Adrenal gland (tissue), 19 donors: ENCODE measurements at regions of chr1 and their contacts with region 1.

Region 1: DNA sequence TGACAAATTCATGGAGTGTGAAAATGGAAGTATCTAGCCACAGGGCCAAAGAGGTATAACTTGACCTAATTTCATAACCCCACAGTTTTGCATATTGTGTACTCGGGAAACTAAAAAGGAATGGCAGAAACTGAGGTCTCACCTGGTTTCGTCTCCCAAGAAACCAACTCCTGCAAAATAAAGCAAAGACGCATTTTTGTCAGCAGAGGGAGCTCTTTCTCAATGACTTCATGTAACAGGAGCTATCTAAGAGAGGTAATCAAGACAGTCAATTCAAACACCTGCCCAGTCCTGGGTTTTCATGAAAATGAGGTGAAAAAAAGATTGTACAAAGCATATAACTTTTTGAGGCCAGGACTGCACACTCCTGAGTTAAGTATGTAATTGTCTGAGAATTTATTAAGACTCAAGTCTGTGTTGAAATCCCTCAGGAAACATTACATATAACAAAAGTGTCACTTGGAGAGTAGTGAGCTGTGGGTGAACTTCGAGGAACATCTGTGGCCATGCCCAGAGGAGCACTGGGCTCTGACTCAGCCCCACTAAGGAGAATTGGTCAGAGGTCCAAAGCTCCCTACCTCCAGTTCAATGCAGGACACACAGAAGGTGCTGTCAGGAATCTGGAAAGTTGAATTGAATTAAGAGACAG is 17.6 kb downstream of the FCRL4 start:
- DNase-seq: peak in 6 of 7 donors; percentile 22 to 52 (median 36)
- H3K4me3 ChIP-seq: no peak overlapping the region
- H3K27ac ChIP-seq: no peak overlapping the region
- H3K4me1 ChIP-seq: no peaks in the 10 kb centered on the region
- H3K27me3 ChIP-seq: peaks cover 6% of the 10 kb centered on the region
- CTCF ChIP-seq: peak; percentile 40 to 64 (median 62)
- POLR2A ChIP-seq: no peak

Region 2: DNA sequence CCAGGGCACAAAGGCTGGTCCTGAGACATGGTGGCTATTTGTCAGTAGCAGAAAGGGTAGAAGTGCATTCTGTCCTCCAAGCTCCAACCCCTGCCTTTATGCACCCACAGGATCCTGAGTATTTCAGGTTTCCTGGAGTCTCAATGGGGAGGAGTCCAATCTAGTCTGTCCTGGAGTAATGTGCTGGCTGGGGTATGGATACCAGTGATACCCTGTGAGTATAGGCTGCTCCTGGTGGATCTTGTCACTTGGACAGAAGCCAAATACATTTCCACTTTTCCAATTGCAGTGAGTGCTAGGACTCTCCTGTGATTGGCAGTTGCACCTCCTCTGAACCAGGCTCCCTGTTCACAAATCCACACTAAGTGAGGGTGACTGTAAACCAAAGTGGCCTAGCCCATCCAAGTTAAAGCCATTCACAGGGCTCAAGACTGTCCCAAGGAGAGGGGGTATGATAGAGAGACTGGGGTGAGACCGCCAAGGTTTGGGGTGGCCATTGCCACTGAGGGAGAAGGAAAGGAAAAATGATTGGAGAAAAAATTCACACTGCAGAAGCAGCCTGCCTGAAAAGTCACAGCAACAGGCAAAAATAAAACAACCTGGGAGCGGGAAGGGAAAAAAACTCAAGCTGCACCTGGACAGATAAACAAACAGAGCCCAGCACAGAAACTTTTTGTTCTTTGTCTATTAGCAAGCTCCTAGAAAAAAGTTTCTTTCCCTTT is 278.7 kb before region 1 on chr1:
- intact Hi-C with region 1: no loop called
- DNase-seq: no peak
- H3K4me3 ChIP-seq: no peak overlapping the region
- H3K27ac ChIP-seq: no peak overlapping the region
- H3K4me1 ChIP-seq: no peaks in the 10 kb centered on the region
- H3K27me3 ChIP-seq: no peaks in the 10 kb centered on the region
- CTCF ChIP-seq: no peak
- POLR2A ChIP-seq: no peak

Region 3: DNA sequence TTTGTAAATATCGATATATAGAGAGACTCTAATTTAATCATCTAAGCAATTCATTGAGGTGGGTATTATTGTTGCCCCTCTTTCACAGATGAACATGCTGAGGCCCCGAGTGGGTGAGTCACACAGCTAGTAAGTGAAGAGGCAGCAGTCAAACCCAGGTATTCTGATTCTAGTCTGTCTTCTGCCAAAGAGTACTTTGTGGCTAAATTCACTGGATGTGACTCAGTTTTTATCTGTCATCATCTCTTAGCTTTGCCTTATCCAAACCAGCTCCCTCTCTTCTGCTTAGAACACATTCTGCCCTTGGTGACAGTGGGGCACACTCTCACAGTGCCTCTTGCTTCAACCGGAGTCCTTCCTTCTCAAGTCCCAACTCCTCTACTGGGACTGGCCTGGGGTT is 39.5 kb before region 1 on chr1:
- intact Hi-C with region 1: no loop called
- DNase-seq: no peak
- H3K4me3 ChIP-seq: no peak overlapping the region
- H3K27ac ChIP-seq: no peak overlapping the region
- H3K4me1 ChIP-seq: no peaks in the 10 kb centered on the region
- H3K27me3 ChIP-seq: peaks cover under 1% of the 10 kb centered on the region
- CTCF ChIP-seq: no peak
- POLR2A ChIP-seq: no peak

Region 4: DNA sequence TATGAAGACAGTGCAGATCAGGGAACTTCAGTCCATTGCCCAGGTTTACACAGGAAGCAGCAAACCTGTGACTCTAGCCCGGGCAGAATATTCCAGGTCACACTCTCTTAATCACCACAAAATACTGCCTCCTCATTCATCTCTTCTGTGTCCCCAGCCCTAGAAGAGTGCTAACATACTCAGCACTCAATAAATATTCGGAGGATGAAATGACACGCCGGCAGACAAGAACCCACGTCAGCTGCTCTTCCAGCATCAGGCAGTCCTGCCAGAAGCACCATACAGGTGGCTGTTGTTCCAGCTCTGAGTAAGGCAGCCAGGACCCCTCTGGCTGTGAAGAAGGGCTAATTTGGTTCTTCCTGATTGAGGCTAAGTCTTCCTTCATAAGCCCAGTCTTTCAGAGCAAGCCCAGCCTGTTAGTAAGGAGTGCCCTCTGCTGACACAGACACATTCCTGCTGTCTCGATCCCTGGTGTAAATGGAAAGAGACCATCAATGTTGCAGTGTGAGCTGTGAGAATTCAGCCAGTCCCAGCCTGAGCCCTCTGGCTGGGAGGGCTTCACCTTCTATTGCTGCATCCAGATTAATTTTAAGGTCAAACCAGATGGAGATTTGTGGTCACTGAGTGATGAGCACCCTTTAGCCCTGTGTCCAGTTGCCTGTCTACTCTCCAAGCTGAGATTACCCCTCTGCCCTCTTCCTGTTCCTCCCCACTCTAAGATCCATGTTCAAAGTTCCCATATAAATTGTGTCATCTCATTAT is 368.2 kb after region 1 on chr1:
- intact Hi-C with region 1: loop called in 1 of 2 experiments (anchors 10 kb)
- DNase-seq: peak in 3 of 7 donors; percentile 32 to 37 (median 36)
- H3K4me3 ChIP-seq: no peak overlapping the region
- H3K27ac ChIP-seq: no peak overlapping the region
- H3K4me1 ChIP-seq: no peaks in the 10 kb centered on the region
- H3K27me3 ChIP-seq: no peaks in the 10 kb centered on the region
- CTCF ChIP-seq: peak in 5 of 6 experiments; percentile 10 to 53 (median 36)
- POLR2A ChIP-seq: no peak

Region 5: GRCh38 chr1:157984469-157984868 is 404.2 kb after region 1 on chr1:
- intact Hi-C with region 1: no loop called
- DNase-seq: no peak
- H3K4me3 ChIP-seq: no peak overlapping the region
- H3K27ac ChIP-seq: no peak overlapping the region
- H3K4me1 ChIP-seq: no peaks in the 10 kb centered on the region
- H3K27me3 ChIP-seq: no peaks in the 10 kb centered on the region
- CTCF ChIP-seq: no peak
- POLR2A ChIP-seq: no peak

Region 6: GRCh38 chr1:158124999-158125398 is 544.7 kb after region 1 on chr1:
- intact Hi-C with region 1: loop called (anchors 10 kb)
- DNase-seq: peak; percentile 81 to 98 (median 93)
- H3K4me3 ChIP-seq: no peak overlapping the region
- H3K27ac ChIP-seq: no peak overlapping the region
- H3K4me1 ChIP-seq: no peaks in the 10 kb centered on the region
- H3K27me3 ChIP-seq: peaks cover 7% of the 10 kb centered on the region
- CTCF ChIP-seq: peak; percentile 89 to 99 (median 98)
- POLR2A ChIP-seq: no peak